ENCODE measurements at regions of chr21 and their contacts with region 1.

Region 1: GRCh38 chr21:14825514-14825974 is 239.3 kb downstream of the NRIP1 start:
- DNase-seq: no peak
- H3K4me3 ChIP-seq: no peak overlapping the region
- H3K4me3 Mint-ChIP-seq: no peak overlapping the region
- H3K27ac ChIP-seq: no peak overlapping the region
- H3K27ac Mint-ChIP-seq: no peak overlapping the region
- H3K4me1 ChIP-seq: no peaks in the 10 kb centered on the region
- H3K4me1 Mint-ChIP-seq: no peaks in the 10 kb centered on the region
- H3K27me3 ChIP-seq: no peaks in the 10 kb centered on the region
- H3K27me3 Mint-ChIP-seq: no peaks in the 10 kb centered on the region

Region 2: DNA sequence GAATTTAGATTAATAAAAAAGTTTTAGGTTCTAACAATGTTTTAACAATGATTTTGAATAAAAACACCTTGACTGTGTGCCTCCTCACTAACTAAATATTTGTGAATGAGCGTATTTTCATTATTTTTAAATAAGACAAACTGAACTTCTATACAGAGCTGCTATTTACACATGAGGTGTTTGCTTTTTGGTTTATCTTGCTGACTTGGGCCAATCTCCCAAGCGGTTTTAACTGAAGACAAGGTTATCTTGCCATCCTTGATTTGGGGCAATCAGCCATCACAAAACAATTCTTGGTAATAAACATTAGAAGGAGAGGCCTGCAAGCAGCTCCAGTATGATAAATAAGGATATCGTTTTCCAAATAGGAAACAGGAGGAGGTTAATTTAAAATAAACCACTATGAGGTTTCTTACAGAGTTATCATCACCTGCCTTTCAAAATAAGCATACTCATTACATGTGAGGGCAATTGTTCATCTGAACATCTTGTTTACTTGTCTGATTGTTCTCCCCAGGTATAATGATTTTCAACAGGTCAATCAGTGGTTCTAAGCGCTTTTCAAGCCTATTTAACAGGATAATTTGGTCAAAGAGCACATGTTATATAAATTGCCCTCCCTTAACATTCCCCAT is 347.6 kb after region 1 on chr21:
- CTCF ChIA-PET with region 1: no interaction called
- POLR2A ChIA-PET with region 1: no interaction called
- intact Hi-C with region 1: no loop called
- DNase-seq: no peak
- H3K4me3 ChIP-seq: no peak overlapping the region
- H3K4me3 Mint-ChIP-seq: no peak overlapping the region
- H3K27ac ChIP-seq: no peak overlapping the region
- H3K27ac Mint-ChIP-seq: no peak overlapping the region
- H3K4me1 ChIP-seq: no peaks in the 10 kb centered on the region
- H3K4me1 Mint-ChIP-seq: peaks cover 0 to 4% (median under 1%) of the 10 kb centered on the region in 4 donors
- H3K27me3 ChIP-seq: no peaks in the 10 kb centered on the region
- H3K27me3 Mint-ChIP-seq: peaks cover 2% of the 10 kb centered on the region in 2 donors

Region 3: DNA sequence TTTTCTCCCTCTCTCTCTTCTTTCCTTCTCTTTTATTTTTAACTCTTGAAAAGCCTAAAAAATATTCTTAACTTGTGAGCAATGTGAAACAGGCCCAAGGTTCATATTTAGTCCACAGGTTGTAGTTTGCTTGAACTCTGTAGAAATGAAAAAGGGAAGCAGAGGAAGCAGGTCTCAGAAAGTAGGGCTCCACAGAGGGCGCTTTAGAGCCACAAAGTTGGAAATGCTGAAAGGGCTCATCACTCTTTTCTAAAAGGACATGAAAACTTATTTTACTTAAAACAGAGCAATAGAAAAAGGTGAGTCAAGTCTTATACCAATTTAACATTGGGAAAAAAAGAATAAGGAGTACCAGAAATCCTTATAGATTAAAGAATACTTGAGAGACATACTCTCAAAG is 1151.3 kb after region 1 on chr21:
- CTCF ChIA-PET with region 1: no interaction called
- POLR2A ChIA-PET with region 1: no interaction called
- intact Hi-C with region 1: loop called (anchors 5 kb)
- DNase-seq: no peak
- H3K4me3 ChIP-seq: no peak overlapping the region
- H3K4me3 Mint-ChIP-seq: no peak overlapping the region
- H3K27ac ChIP-seq: no peak overlapping the region
- H3K27ac Mint-ChIP-seq: no peak overlapping the region
- H3K4me1 ChIP-seq: no peaks in the 10 kb centered on the region
- H3K4me1 Mint-ChIP-seq: no peaks in the 10 kb centered on the region
- H3K27me3 ChIP-seq: no peaks in the 10 kb centered on the region
- H3K27me3 Mint-ChIP-seq: peaks cover 0 to 2% of the 10 kb centered on the region in 2 donors

Measured in CD4-positive, alpha-beta memory T cell (primary cell).